Testis (tissue), 5 donors: ENCODE measurements at regions of chr19 and their contacts with region 1.

Region 1: GRCh38 chr19:7562646-7563393 is 27.3 kb downstream of the PNPLA6 start:
- DNase-seq: peak; percentile 36
- H3K4me3 ChIP-seq: no peak overlapping the region
- H3K27ac ChIP-seq: no peak overlapping the region
- H3K4me1 ChIP-seq: no peaks in the 10 kb centered on the region
- H3K27me3 ChIP-seq: no peaks in the 10 kb centered on the region
- CTCF ChIP-seq: no peak
- POLR2A ChIP-seq: no peak

Region 2: GRCh38 chr19:7618771-7619514 is 56.1 kb after region 1 on chr19:
- intact Hi-C with region 1: no loop called
- DNase-seq: peak; percentile 79
- H3K4me3 ChIP-seq: no peak overlapping the region
- H3K27ac ChIP-seq: peak overlapping the region; percentile 71 to 81
- H3K4me1 ChIP-seq: peaks cover 32% of the 10 kb centered on the region
- H3K27me3 ChIP-seq: no peaks in the 10 kb centered on the region
- CTCF ChIP-seq: no peak
- POLR2A ChIP-seq: no peak

Region 3: GRCh38 chr19:7674010-7675005 is 111.5 kb after region 1 on chr19:
- intact Hi-C with region 1: loop called (anchors 10 kb)
- DNase-seq: peak; percentile 80
- H3K4me3 ChIP-seq: peak overlapping the region in 1 of 2 donors; percentile 6
- H3K27ac ChIP-seq: no peak overlapping the region
- H3K4me1 ChIP-seq: no peaks in the 10 kb centered on the region
- H3K27me3 ChIP-seq: no peaks in the 10 kb centered on the region
- CTCF ChIP-seq: no peak
- POLR2A ChIP-seq: no peak